ENCODE measurements at regions of chr2 and their contacts with region 1.

Region 1: DNA sequence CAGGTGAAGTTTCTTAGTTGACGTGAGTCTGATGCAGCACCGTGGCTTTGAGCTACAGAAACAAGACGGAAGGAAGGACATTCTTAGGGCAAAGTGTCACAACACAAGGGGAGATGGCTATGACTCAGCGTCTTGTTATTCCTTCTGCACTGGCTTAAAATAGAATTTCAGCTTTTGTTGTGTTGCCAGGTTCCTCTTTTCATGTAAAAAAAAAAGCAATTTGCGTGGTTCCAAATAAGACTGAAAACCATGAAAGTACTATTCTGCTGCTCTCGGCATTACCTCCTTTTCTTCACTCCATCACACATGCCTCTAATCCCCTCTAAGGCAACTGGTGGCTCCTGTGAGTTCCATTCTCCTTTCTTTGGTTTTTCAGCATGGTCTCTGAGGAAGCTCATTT is 150.1 kb downstream of the ANTXR1 start:
- DNase-seq: peak; percentile 33 to 81
- H3K4me3 ChIP-seq: 0 out of 2 replicates have a peak overlapping the region, but pooled peaks have one; percentile 14
- H3K27ac ChIP-seq: peak overlapping the region; percentile 43
- H3K4me1 ChIP-seq: peaks cover 22% of the 10 kb centered on the region
- H3K27me3 ChIP-seq: no peaks in the 10 kb centered on the region
- CTCF ChIP-seq: no peak

Region 2: GRCh38 chr2:68971591-68972231 is 191.4 kb before region 1 on chr2:
- CTCF ChIA-PET with region 1: no interaction called
- POLR2A ChIA-PET with region 1: no interaction called
- intact Hi-C with region 1: loop called (anchors 5 kb)
- DNase-seq: peak; percentile 72 to 89
- H3K4me3 ChIP-seq: no peak overlapping the region
- H3K27ac ChIP-seq: peak overlapping the region; percentile 80
- H3K4me1 ChIP-seq: peaks cover 28% of the 10 kb centered on the region
- H3K27me3 ChIP-seq: no peaks in the 10 kb centered on the region
- CTCF ChIP-seq: no peak

Region 3: GRCh38 chr2:69138793-69139510 is 24.2 kb before region 1 on chr2:
- CTCF ChIA-PET with region 1: no interaction called
- POLR2A ChIA-PET with region 1: no interaction called
- intact Hi-C with region 1: loop called (anchors 2 kb)
- DNase-seq: peak; percentile 70 to 77
- H3K4me3 ChIP-seq: 0 out of 2 replicates have a peak overlapping the region, but pooled peaks have one; percentile 1
- H3K27ac ChIP-seq: peak overlapping the region; percentile 69
- H3K4me1 ChIP-seq: peaks cover 37% of the 10 kb centered on the region
- H3K27me3 ChIP-seq: no peaks in the 10 kb centered on the region
- CTCF ChIP-seq: no peak

Region 4: GRCh38 chr2:69177785-69178636 is 14.9 kb after region 1 on chr2:
- CTCF ChIA-PET with region 1: no interaction called
- POLR2A ChIA-PET with region 1: interaction called, 10 read pairs
- intact Hi-C with region 1: loop called (anchors 2 kb)
- DNase-seq: peak; percentile 68 to 84
- H3K4me3 ChIP-seq: peak overlapping the region; percentile 1; the same call in 1 of the 2 replicates
- H3K27ac ChIP-seq: peak overlapping the region; percentile 55
- H3K4me1 ChIP-seq: peaks cover 15% of the 10 kb centered on the region
- H3K27me3 ChIP-seq: no peaks in the 10 kb centered on the region
- CTCF ChIP-seq: no peak

Region 5: DNA sequence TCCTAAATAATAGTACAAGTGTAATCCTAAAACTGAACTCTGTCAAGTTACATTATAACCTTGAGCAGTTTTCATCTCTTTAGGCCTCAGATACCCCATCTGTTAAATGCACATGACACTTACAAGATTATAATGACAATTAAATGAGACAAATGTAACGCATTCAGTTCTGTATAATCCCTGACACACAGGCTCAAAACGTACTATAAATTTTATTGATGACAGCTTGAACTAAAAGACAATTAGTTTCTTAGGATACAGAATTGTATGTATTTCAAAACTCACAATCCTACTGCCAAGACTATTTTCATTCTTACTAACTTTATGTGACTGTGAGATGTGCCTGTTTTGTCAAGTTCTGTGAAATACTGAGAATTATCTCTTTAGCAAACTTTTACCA is 167.7 kb after region 1 on chr2:
- CTCF ChIA-PET with region 1: interaction called, 12 read pairs
- POLR2A ChIA-PET with region 1: no interaction called
- intact Hi-C with region 1: no loop called
- DNase-seq: no peak
- H3K4me3 ChIP-seq: no peak overlapping the region
- H3K27ac ChIP-seq: no peak overlapping the region
- H3K4me1 ChIP-seq: no peaks in the 10 kb centered on the region
- H3K27me3 ChIP-seq: no peaks in the 10 kb centered on the region
- CTCF ChIP-seq: no peak

Measured in PC-9 (cell line).